ENCODE measurements at regions of chr17 and their contacts with region 1.

Region 1: DNA sequence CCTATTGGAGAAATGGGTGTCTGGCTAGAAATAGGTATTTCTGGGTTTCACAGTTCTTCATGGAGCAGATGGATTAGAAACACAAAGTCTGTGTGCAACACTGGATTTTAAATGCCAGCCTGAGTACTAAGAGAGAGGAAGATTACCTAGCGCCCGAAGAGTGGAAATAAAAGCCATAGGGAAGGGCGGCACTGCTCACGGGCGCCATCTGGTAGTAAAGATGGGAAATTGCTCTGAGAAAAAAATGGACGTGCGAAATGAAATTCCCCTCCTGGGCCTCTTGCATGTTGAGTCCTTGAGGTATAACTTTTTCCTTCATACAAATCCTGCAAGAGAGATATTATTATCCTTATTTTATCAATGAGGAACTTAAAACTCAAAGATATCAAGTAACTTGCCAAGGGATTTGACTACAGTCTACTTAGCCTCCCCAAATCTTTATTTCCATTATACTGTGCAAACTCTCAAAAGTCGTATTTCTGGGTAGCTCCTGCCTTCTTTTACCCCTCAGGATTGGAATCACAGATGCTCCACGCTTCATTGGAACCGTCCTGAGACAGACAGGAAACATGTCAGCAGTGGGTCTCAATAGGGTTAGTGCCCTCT is 72.8 kb downstream of the MMD start:
- DNase-seq: peak; percentile 47
- H3K4me3 ChIP-seq: no peak overlapping the region
- H3K27ac ChIP-seq: no peak overlapping the region
- H3K4me1 ChIP-seq: no peaks in the 10 kb centered on the region
- H3K27me3 ChIP-seq: no peaks in the 10 kb centered on the region
- CTCF ChIP-seq: peak; percentile 64 to 78 (median 73)
- POLR2A ChIP-seq: no peak

Region 2: GRCh38 chr17:54992797-54993639 is 355.8 kb before region 1 on chr17:
- intact Hi-C with region 1: loop called (anchors 5 kb)
- DNase-seq: peak; percentile 23
- H3K4me3 ChIP-seq: no peak overlapping the region
- H3K27ac ChIP-seq: no peak overlapping the region
- H3K4me1 ChIP-seq: no peaks in the 10 kb centered on the region
- H3K27me3 ChIP-seq: no peaks in the 10 kb centered on the region
- CTCF ChIP-seq: peak; percentile 26 to 66 (median 63)
- POLR2A ChIP-seq: no peak

Region 3: GRCh38 chr17:55053855-55054254 is 295.0 kb before region 1 on chr17:
- intact Hi-C with region 1: loop called (anchors 10 kb)
- DNase-seq: no peak
- H3K4me3 ChIP-seq: no peak overlapping the region
- H3K27ac ChIP-seq: no peak overlapping the region
- H3K4me1 ChIP-seq: no peaks in the 10 kb centered on the region
- H3K27me3 ChIP-seq: no peaks in the 10 kb centered on the region
- CTCF ChIP-seq: peak in 1 of 4 experiments; percentile 41
- POLR2A ChIP-seq: no peak

Region 4: GRCh38 chr17:55238179-55238930 is 110.5 kb before region 1 on chr17:
- intact Hi-C with region 1: loop called (anchors 2 kb)
- DNase-seq: peak; percentile 94
- H3K4me3 ChIP-seq: peak overlapping the region; percentile 33
- H3K27ac ChIP-seq: peak overlapping the region; percentile 61 to 79
- H3K4me1 ChIP-seq: no peaks in the 10 kb centered on the region
- H3K27me3 ChIP-seq: no peaks in the 10 kb centered on the region
- CTCF ChIP-seq: peak in 2 of 4 experiments; percentile 30 to 33
- POLR2A ChIP-seq: peak; percentile 28

Region 5: GRCh38 chr17:55264645-55265298 is 84.1 kb before region 1 on chr17 and contains the start of gene HLF:
- intact Hi-C with region 1: loop called (anchors 10 kb)
- DNase-seq: peak; percentile 69
- H3K4me3 ChIP-seq: peak within 1 kb of the TSS; percentile 39 to 45
- H3K27ac ChIP-seq: peak within 1 kb of the TSS; percentile 78 to 80
- H3K4me1 ChIP-seq: no peaks in the 10 kb centered on the region
- H3K27me3 ChIP-seq: no peaks in the 10 kb centered on the region
- CTCF ChIP-seq: no peak
- POLR2A ChIP-seq: peak; percentile 29
- total RNA-seq, gene HLF: 26.5 to 34.9 TPM

Region 6: DNA sequence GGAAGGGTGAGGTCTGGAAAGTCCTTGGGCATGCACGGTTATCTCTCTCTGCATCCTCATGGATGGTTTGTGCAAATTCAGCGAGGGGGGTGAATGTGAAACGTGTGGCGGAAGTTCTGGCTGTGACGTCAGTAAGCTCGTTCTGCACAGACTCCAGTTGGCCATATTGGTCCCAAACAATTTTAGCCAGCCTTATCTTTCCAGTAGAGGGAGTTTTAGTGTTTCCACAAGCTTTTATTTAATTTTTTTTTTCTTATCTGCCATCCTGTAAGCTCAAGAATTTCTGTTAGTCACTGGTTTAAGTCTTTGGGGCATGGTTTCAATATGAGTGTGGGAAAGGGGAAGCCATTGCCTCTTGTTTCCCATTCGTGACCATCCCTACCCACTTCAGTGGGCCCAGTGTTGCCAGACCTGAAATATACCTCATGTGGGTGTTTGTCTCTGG is 45.1 kb before region 1 on chr17:
- intact Hi-C with region 1: loop called (anchors 5 kb)
- DNase-seq: no peak
- H3K4me3 ChIP-seq: no peak overlapping the region
- H3K27ac ChIP-seq: no peak overlapping the region
- H3K4me1 ChIP-seq: no peaks in the 10 kb centered on the region
- H3K27me3 ChIP-seq: no peaks in the 10 kb centered on the region
- CTCF ChIP-seq: no peak
- POLR2A ChIP-seq: no peak

Region 7: GRCh38 chr17:55463600-55463999 is 114.7 kb after region 1 on chr17:
- intact Hi-C with region 1: no loop called
- DNase-seq: no peak
- H3K4me3 ChIP-seq: no peak overlapping the region
- H3K27ac ChIP-seq: no peak overlapping the region
- H3K4me1 ChIP-seq: no peaks in the 10 kb centered on the region
- H3K27me3 ChIP-seq: no peaks in the 10 kb centered on the region
- CTCF ChIP-seq: no peak
- POLR2A ChIP-seq: no peak